Mammary epithelial cell (primary cell): ENCODE measurements at regions of chr5 and their contacts with region 1.

Region 1: DNA sequence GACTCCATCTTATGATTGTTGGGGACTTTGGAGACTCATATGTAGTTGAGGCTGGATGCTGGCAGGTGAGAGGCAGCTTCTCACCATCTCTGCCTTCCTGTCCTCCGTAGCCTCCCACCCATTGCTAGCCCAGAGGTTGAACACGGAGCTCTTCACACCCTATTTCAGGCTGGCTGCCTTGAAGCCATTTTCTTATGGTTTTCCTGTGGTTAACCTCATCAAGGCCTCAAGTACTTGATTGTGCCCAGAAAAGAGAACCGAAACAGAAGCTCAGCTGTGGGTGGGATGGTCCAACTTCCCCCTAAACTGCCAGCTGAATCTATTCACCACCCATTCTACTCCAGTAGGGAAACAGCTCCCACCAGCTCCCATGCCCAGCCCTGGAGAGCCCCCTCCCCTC is 102.9 kb downstream of the LIFR start:
- DNase-seq: no peak
- H3K4me3 ChIP-seq: no peak overlapping the region
- H3K27ac ChIP-seq: no peak overlapping the region
- H3K4me1 ChIP-seq: peaks cover 12% of the 10 kb centered on the region
- H3K27me3 ChIP-seq: no peaks in the 10 kb centered on the region
- CTCF ChIP-seq: no peak

Region 2: GRCh38 chr5:38515646-38516045 is 62.1 kb after region 1 on chr5:
- CTCF ChIA-PET with region 1: no interaction called
- dilution Hi-C with region 1: loop called (anchors 5 kb)
- in situ Hi-C with region 1: no loop called
- intact Hi-C with region 1: no loop called
- DNase-seq: no peak
- H3K4me3 ChIP-seq: no peak overlapping the region
- H3K27ac ChIP-seq: no peak overlapping the region
- H3K4me1 ChIP-seq: no peaks in the 10 kb centered on the region
- H3K27me3 ChIP-seq: no peaks in the 10 kb centered on the region
- CTCF ChIP-seq: peak; percentile 34 to 68

Region 3: DNA sequence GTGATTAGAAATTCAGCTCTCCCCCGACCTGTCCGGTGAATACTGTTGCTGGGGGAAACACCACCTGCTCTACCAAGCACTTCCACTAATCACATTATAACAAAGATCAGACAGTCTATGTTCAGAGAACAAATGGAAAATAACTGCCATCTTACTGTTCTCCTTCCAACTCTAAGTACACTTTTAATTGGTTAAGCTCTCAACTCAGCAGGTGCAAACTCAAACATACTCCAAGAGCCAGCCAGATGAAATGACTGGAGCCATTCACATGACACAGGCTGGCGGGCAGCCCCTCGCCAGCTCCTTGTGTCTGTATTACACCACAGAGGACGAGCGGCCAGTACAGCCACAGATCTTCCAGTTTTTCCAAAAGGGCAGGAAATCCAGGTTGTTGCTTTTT is 86.8 kb after region 1 on chr5:
- CTCF ChIA-PET with region 1: no interaction called
- dilution Hi-C with region 1: no loop called
- in situ Hi-C with region 1: loop called (anchors 10 kb)
- intact Hi-C with region 1: no loop called
- DNase-seq: no peak
- H3K4me3 ChIP-seq: no peak overlapping the region
- H3K27ac ChIP-seq: no peak overlapping the region
- H3K4me1 ChIP-seq: peaks cover 7% of the 10 kb centered on the region
- H3K27me3 ChIP-seq: no peaks in the 10 kb centered on the region
- CTCF ChIP-seq: no peak